Vagina (tissue), 2 donors: ENCODE measurements at regions of chrX and their contacts with region 1.

Region 1: DNA sequence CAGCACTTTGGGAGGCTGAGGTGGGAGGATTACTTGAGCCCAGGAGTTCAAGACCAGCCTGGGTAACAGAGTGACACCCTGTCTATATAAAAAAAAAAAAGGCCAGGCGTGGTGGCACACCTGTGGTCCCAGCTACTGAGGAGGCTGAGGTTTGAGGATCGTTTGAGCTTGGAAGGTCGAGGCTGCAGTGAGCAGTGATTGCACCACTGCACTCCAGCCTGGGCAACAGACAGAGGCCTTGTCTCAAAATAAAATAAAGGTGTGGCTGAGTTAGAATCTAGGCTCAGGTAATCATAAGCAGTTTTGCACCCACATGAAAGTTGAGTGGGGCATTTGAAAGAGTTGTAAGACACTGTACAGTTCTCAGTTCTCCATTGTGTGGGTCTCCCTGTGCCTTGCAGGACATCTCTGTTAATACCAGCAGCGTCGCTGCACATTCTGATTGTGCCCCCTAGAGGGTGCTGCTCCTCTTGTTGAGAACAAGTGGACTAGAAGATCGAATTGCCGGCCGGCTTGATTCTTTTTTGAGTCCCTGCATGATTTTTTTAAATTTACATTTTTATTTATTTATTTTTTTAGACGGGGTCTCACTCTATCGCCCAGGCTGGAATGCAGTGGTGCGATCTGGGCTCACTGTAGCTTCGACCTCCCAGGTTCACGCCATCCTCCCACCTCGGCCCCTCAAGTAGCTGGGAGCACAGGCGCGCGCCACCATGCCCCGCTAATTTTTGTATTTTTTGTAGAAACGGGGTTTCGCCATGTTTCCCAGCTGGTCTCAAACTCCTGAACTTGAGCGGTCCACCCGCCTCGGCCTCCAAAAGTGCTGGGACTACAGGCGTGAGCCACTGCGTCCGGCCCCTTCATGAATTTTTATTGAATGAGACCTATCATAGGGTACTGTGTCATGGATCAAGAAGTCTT is 73.6 kb upstream of the RBMX start:
- DNase-seq: no peak
- H3K4me3 ChIP-seq: no peak overlapping the region
- H3K27ac ChIP-seq: no peak overlapping the region
- H3K4me1 ChIP-seq: no peaks in the 10 kb centered on the region
- H3K27me3 ChIP-seq: no peaks in the 10 kb centered on the region
- CTCF ChIP-seq: peak in 2 of 3 experiments; percentile 19 to 42
- POLR2A ChIP-seq: no peak

Region 2: GRCh38 chrX:137051978-137052642 is 98.0 kb after region 1 on chrX:
- intact Hi-C with region 1: loop called (anchors 10 kb)
- DNase-seq: no peak
- H3K4me3 ChIP-seq: peak overlapping the region; percentile 34 to 40
- H3K27ac ChIP-seq: no peak overlapping the region
- H3K4me1 ChIP-seq: peaks cover 12% of the 10 kb centered on the region
- H3K27me3 ChIP-seq: peaks cover 4% of the 10 kb centered on the region
- CTCF ChIP-seq: peak; percentile 19 to 62 (median 31)
- POLR2A ChIP-seq: no peak